Activated T-helper 2 cell treated with anti-CD3 and anti-CD28 coated beads, Interferon-gamma antibody, Interleukin-2, Interleukin-4, amounts not matched to agents 10 μg/mL and 5 μg/mL and 100 μg/mL, durations not matched to agents 14 hours and 24 hours and 36 hours (primary cell): ENCODE measurements at regions of chr5 and their contacts with region 1.

Region 1: GRCh38 chr5:177311723-177312648 is at the start of gene MXD3:
- DNase-seq: peak; percentile 97
- H3K4me3 Mint-ChIP-seq: peak within 1 kb of the TSS; percentile 92
- H3K27ac Mint-ChIP-seq: peak within 1 kb of the TSS; percentile 89
- H3K4me1 Mint-ChIP-seq: peaks cover 39% of the 10 kb centered on the region
- H3K27me3 Mint-ChIP-seq: no peaks in the 10 kb centered on the region
- total RNA-seq, gene MXD3: 12.8 and 13.9 TPM in 2 replicates

Region 2: DNA sequence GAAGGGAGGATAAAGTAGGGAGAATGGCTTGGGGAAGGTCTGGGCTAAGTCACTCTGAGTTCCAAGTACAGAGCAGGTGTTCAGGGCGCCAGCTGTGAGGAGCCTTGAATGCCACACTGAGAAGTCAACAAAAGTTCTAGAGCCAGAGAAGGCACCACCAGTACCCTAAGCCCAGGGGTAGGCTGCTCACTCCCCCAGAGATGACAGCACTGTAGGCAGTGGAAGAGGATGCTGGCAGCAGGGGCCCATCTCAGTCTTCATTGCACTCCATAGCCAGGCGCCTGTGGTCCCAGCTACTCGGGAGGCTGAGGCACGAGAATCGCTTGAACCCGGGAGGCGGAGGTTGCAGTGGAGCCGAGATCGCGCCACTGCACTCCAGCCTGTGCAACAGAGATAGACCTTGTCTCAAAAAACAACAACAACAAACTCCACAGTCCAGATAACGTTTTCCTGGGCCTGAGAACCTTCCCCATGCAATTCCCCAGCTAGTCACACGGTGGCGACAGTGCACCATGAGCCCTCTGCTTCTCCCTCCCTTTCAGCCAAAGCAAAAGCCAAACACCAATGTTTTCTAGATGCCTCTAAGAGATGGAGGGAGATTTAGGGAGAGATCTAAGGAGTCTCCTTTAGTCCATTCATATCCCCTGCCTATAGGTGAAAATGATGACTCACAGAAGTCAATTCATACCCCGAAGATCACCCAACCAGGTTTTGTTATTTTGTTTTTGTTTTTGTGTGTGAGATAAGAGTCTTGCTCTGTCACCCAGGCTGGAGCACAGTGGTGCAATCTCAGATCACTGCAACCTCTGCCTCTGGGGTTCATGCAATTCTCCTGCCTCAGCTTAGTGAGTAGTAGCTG is 198.2 kb before region 1 on chr5:
- intact Hi-C with region 1: loop called (anchors 2 kb)
- DNase-seq: peak; percentile 72
- H3K4me3 Mint-ChIP-seq: no peak overlapping the region
- H3K27ac Mint-ChIP-seq: peak overlapping the region; percentile 34
- H3K4me1 Mint-ChIP-seq: peaks cover 14% of the 10 kb centered on the region
- H3K27me3 Mint-ChIP-seq: peaks cover 5% of the 10 kb centered on the region

Region 3: GRCh38 chr5:177351385-177352329 is 39.7 kb after region 1 on chr5 and contains the start of gene LMAN2:
- intact Hi-C with region 1: loop called (anchors 2 kb)
- DNase-seq: peak; percentile 92
- H3K4me3 Mint-ChIP-seq: peak within 1 kb of the TSS; percentile 95
- H3K27ac Mint-ChIP-seq: peak within 1 kb of the TSS; percentile 100
- H3K4me1 Mint-ChIP-seq: peaks cover 44% of the 10 kb centered on the region
- H3K27me3 Mint-ChIP-seq: no peaks in the 10 kb centered on the region
- total RNA-seq, gene LMAN2: 130 and 137 TPM in 2 replicates

Region 4: GRCh38 chr5:177362610-177363507 is 50.9 kb after region 1 on chr5:
- intact Hi-C with region 1: loop called (anchors 5 kb)
- DNase-seq: peak; percentile 44
- H3K4me3 Mint-ChIP-seq: peak overlapping the region; percentile 64
- H3K27ac Mint-ChIP-seq: peak overlapping the region; percentile 43
- H3K4me1 Mint-ChIP-seq: peaks cover 51% of the 10 kb centered on the region
- H3K27me3 Mint-ChIP-seq: no peaks in the 10 kb centered on the region

Region 5: GRCh38 chr5:177390363-177391300 is 78.6 kb after region 1 on chr5:
- intact Hi-C with region 1: loop called (anchors 2 kb)
- DNase-seq: peak; percentile 82
- H3K4me3 Mint-ChIP-seq: no peak overlapping the region
- H3K27ac Mint-ChIP-seq: peak overlapping the region; percentile 63
- H3K4me1 Mint-ChIP-seq: peaks cover 26% of the 10 kb centered on the region
- H3K27me3 Mint-ChIP-seq: peaks cover 8% of the 10 kb centered on the region

Region 6: GRCh38 chr5:177454397-177455035 is 142.5 kb after region 1 on chr5:
- intact Hi-C with region 1: loop called (anchors 1 kb)
- DNase-seq: peak; percentile 89
- H3K4me3 Mint-ChIP-seq: peak overlapping the region; percentile 84
- H3K27ac Mint-ChIP-seq: no peak overlapping the region
- H3K4me1 Mint-ChIP-seq: peaks cover 17% of the 10 kb centered on the region
- H3K27me3 Mint-ChIP-seq: peaks cover 8% of the 10 kb centered on the region